GM12878 (cell line): ENCODE measurements at regions of chr1 and their contacts with region 1.

Region 1: DNA sequence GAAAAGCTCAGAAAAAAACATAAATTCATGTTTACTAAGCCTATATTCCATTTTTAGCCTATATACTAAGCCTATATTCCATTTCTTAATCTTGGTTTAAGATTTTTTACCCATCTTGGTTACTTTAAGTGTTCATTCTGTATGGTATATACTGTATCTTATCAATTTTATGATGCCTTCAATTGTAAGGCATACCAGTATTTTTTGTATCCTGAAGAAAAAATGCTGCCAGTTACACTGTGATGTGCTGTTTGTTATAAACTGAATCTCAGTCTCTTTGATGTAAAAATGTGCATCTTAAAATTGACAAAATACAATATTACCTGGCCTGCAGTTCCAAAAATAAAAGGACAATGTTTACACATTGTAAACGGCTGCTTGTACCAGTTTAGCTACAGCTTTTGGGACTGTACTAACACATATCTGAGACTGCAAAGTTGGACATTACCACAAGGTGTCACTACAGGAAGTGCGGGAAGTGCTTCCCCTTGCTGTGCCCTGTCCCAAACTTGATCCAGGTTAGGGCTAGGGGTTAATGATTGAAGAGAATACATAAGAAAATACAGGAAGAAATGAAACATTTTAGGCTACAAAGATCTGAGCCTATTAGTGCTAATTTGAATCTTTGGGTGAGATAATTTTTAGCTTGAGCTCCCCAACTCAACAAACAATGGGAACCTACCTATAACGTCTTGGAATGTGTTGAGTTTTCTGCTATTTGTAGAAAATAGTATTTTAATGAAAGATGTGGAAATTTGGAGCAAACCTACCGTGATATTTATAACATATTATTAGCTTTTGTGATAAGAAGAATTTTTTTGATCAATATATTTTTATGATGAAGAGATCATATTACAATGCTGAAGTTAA is 108.9 kb downstream of the LBR start:
- DNase-seq: peak; percentile 2
- ATAC-seq: peak; percentile 96
- H3K4me3 ChIP-seq: no peak overlapping the region
- H3K27ac ChIP-seq: no peak overlapping the region
- H3K4me1 ChIP-seq: no peaks in the 10 kb centered on the region; the same call in 1 of the 2 replicates
- H3K27me3 ChIP-seq: no peaks in the 10 kb centered on the region
- CTCF ChIP-seq: peak; percentile 69 to 86 (median 74)
- EP300 ChIP-seq: no peak
- POLR2A ChIP-seq: no peak
- RAD21 ChIP-seq: peak; percentile 65

Region 2: DNA sequence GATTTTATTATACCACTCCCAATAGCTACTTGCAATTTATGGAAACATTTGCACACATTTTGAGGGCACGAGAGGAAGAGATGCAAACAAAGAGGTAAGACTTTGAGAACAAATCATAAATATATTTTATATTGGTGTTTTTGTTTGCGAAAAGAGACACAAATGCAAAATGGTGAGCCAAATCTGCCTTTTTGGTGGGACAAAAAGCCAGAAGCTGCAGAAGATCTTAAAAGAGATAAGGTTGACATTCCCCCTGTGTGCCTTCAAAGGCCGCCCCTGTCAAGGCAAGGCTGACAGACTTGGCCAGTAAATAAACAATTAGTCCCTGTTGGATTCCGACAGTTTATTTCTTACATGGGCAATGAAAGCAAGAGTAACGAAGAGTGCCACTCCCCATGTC is 13.9 kb before region 1 on chr1:
- CTCF ChIA-PET with region 1: interaction called, 17 read pairs
- POLR2A ChIA-PET with region 1: no interaction called
- RAD21 ChIA-PET with region 1: no interaction called
- SMC1A ChIA-PET with region 1: interaction called, 4 read pairs
- in situ Hi-C with region 1: no loop called
- intact Hi-C with region 1: no loop called
- DNase-seq: no peak
- ATAC-seq: no peak
- H3K4me3 ChIP-seq: no peak overlapping the region
- H3K27ac ChIP-seq: no peak overlapping the region
- H3K4me1 ChIP-seq: no peaks in the 10 kb centered on the region
- H3K27me3 ChIP-seq: no peaks in the 10 kb centered on the region
- CTCF ChIP-seq: no peak
- EP300 ChIP-seq: no peak
- POLR2A ChIP-seq: no peak
- RAD21 ChIP-seq: no peak

Region 3: GRCh38 chr1:225329041-225329440 is 10.1 kb after region 1 on chr1:
- CTCF ChIA-PET with region 1: interaction called, 29 read pairs
- POLR2A ChIA-PET with region 1: no interaction called
- RAD21 ChIA-PET with region 1: interaction called, 4 read pairs
- SMC1A ChIA-PET with region 1: interaction called, 4 read pairs
- in situ Hi-C with region 1: no loop called
- intact Hi-C with region 1: no loop called
- DNase-seq: no peak
- ATAC-seq: no peak
- H3K4me3 ChIP-seq: no peak overlapping the region
- H3K27ac ChIP-seq: no peak overlapping the region
- H3K4me1 ChIP-seq: no peaks in the 10 kb centered on the region
- H3K27me3 ChIP-seq: no peaks in the 10 kb centered on the region
- CTCF ChIP-seq: no peak
- EP300 ChIP-seq: no peak
- POLR2A ChIP-seq: no peak
- RAD21 ChIP-seq: no peak

Region 4: DNA sequence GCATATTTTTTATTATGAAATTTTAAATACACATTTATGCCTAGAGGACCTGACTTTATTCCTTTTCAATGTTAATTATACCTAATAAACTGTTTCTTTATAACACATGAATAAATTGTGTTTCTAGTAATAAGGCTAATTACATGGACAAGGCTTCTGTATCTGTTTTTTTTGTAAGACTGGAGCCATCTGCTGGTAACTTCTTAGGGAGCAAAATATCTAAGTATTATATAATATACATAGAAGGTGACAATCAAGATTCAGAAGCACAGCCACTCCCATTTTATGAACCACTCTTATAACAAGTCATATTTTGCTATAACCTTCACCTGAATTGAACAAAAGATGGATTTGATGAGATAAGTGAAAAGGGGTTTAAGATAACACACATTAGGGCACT is 24.7 kb after region 1 on chr1:
- CTCF ChIA-PET with region 1: interaction called, 13 read pairs
- POLR2A ChIA-PET with region 1: no interaction called
- RAD21 ChIA-PET with region 1: no interaction called
- SMC1A ChIA-PET with region 1: interaction called, 6 read pairs
- in situ Hi-C with region 1: no loop called
- intact Hi-C with region 1: loop called (anchors 1 kb)
- DNase-seq: no peak
- ATAC-seq: peak; percentile 62
- H3K4me3 ChIP-seq: no peak overlapping the region
- H3K27ac ChIP-seq: no peak overlapping the region
- H3K4me1 ChIP-seq: no peaks in the 10 kb centered on the region
- H3K27me3 ChIP-seq: no peaks in the 10 kb centered on the region; a peak in 1 of 4 replicates
- CTCF ChIP-seq: peak in 2 of 3 experiments; percentile 11 to 14; a peak in 2 of 6 replicates
- EP300 ChIP-seq: no peak
- POLR2A ChIP-seq: no peak
- RAD21 ChIP-seq: no peak

Region 5: GRCh38 chr1:225371366-225372010 is 52.5 kb after region 1 on chr1:
- CTCF ChIA-PET with region 1: no interaction called
- POLR2A ChIA-PET with region 1: no interaction called
- RAD21 ChIA-PET with region 1: no interaction called
- SMC1A ChIA-PET with region 1: no interaction called
- in situ Hi-C with region 1: no loop called
- intact Hi-C with region 1: no loop called
- DNase-seq: no peak
- ATAC-seq: no peak
- H3K4me3 ChIP-seq: no peak overlapping the region
- H3K27ac ChIP-seq: no peak overlapping the region
- H3K4me1 ChIP-seq: no peaks in the 10 kb centered on the region
- H3K27me3 ChIP-seq: no peaks in the 10 kb centered on the region
- CTCF ChIP-seq: no peak
- EP300 ChIP-seq: no peak
- POLR2A ChIP-seq: no peak
- RAD21 ChIP-seq: no peak

Region 6: GRCh38 chr1:225428068-225428880 is 109.3 kb after region 1 on chr1:
- CTCF ChIA-PET with region 1: interaction called, 12 read pairs
- POLR2A ChIA-PET with region 1: no interaction called
- RAD21 ChIA-PET with region 1: interaction called, 3 read pairs
- SMC1A ChIA-PET with region 1: no interaction called
- in situ Hi-C with region 1: no loop called
- intact Hi-C with region 1: no loop called
- DNase-seq: peak; percentile 65
- ATAC-seq: peak; percentile 92
- H3K4me3 ChIP-seq: peak overlapping the region; percentile 80
- H3K27ac ChIP-seq: peak overlapping the region; percentile 96
- H3K4me1 ChIP-seq: peaks cover 17% of the 10 kb centered on the region
- H3K27me3 ChIP-seq: no peaks in the 10 kb centered on the region
- CTCF ChIP-seq: no peak
- EP300 ChIP-seq: no peak
- POLR2A ChIP-seq: peak; percentile 93
- RAD21 ChIP-seq: no peak

Region 7: DNA sequence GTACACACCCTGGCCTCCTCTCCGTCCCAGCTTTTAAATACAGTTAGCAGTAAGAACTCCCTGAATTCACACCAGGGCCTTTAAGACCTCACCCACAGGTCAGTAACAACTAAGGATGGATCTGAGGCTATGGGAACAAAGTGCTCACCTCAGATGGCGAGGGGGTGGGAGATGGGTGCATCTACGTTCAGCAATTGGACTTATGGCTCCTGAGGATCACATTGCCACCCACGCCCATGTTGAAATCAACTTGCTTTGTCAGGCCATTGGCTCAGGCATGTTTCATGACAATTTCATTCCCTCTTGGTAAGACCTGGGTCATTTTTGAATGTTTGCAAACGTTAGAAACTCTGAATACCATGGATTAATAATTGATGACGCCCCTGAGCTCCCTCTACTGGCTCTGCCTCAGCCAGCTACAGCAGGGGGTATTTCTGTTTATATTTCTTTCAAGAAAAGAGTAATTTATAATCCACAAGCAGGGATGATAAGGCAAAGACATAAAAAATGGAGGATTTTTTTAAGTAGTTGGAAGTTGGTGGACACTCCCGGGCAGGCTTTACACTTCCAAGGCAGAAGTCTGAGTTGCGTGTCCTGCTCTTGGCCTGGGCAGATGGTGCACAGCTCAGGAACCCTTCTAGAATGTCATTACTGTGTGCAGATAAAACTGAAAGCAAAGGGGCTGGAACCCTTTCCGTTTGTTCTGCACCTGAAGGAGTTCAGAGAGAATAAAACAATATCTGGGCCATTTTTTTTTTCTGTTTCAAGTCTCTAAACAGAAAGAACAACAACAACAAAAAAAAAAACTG is 122.6 kb after region 1 on chr1:
- CTCF ChIA-PET with region 1: interaction called, 13 read pairs
- POLR2A ChIA-PET with region 1: interaction called, 3 read pairs
- RAD21 ChIA-PET with region 1: interaction called, 6 read pairs
- SMC1A ChIA-PET with region 1: interaction called, 9 read pairs
- in situ Hi-C with region 1: no loop called
- intact Hi-C with region 1: no loop called
- DNase-seq: no peak
- ATAC-seq: peak; percentile 41
- H3K4me3 ChIP-seq: peak overlapping the region; percentile 2; the same call in 1 of the 2 replicates
- H3K27ac ChIP-seq: peak overlapping the region; percentile 59
- H3K4me1 ChIP-seq: peaks cover 33% of the 10 kb centered on the region
- H3K27me3 ChIP-seq: no peaks in the 10 kb centered on the region
- CTCF ChIP-seq: peak; percentile 39 to 46 (median 45); a peak in 5 of 6 replicates
- EP300 ChIP-seq: no peak
- POLR2A ChIP-seq: no peak
- RAD21 ChIP-seq: peak; percentile 37; the same call in 1 of the 2 replicates

Region 8: GRCh38 chr1:225977937-225978748 is 659.2 kb after region 1 on chr1:
- CTCF ChIA-PET with region 1: interaction called, 7 read pairs
- POLR2A ChIA-PET with region 1: no interaction called
- RAD21 ChIA-PET with region 1: interaction called, 4 read pairs
- SMC1A ChIA-PET with region 1: no interaction called
- in situ Hi-C with region 1: no loop called
- intact Hi-C with region 1: loop called (anchors 1 kb)
- DNase-seq: peak; percentile 45
- ATAC-seq: peak; percentile 85
- H3K4me3 ChIP-seq: no peak overlapping the region
- H3K27ac ChIP-seq: no peak overlapping the region
- H3K4me1 ChIP-seq: 0 out of 2 replicates have a peak, but pooled peaks cover 5% of the 10 kb centered on the region
- H3K27me3 ChIP-seq: no peaks in the 10 kb centered on the region
- CTCF ChIP-seq: peak; percentile 9 to 54 (median 11); a peak in 4 of 6 replicates
- EP300 ChIP-seq: no peak
- POLR2A ChIP-seq: no peak
- RAD21 ChIP-seq: peak; percentile 51